ENCODE measurements at regions of chr18 and their contacts with region 1.

Region 1: GRCh38 chr18:22348521-22349316 is 69.0 kb downstream of the CTAGE1 start:
- DNase-seq: peak; percentile 91

Region 2: DNA sequence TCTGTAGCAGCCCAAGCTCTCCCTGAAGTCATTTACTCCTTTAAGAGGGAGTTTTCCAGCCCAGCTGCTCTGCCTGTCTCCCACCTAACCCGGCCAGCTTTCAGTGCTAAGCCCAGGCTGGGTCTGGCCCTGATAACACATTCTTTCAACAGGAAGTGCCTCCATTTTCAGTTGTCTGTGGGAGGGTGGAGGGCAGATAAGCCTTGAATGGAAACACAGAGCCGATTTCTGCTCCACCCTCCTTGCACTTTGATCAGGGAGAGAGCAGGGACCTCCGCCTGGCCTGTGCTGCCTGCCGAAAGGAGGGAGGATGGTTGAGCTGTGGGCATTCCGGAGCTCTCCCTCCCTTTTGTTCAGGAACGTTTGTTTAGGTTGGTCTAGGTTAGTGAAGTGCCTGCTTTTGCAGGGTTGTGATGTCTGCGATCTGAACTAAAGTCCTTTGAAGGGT is 154.5 kb before region 1 on chr18:
- intact Hi-C with region 1: loop called in 1 of 2 experiments (anchors 5 kb)
- DNase-seq: no peak

Region 3: DNA sequence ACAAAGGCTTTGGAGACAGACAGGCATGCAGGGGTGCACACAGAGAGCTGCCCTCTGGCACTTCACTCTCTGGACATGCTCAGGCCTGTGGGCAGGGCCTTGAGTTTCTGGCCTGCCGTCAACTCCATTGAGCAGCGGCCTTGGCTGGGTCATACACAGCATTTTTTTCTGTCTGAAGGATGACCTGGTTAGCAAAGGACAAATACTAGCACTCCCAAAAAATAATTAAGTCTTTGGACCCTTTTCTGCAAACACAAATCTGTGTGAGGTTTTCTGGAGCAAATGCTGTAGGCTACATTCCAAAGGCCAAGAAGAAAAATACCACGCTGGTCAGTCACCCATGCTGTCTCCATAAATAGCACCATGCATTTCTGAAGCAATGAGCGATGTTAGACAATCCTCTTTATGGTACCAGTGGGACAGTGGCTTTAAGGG is 193.7 kb after region 1 on chr18:
- intact Hi-C with region 1: loop called in 1 of 2 experiments (anchors 10 kb)
- DNase-seq: peak; percentile 88

Region 4: DNA sequence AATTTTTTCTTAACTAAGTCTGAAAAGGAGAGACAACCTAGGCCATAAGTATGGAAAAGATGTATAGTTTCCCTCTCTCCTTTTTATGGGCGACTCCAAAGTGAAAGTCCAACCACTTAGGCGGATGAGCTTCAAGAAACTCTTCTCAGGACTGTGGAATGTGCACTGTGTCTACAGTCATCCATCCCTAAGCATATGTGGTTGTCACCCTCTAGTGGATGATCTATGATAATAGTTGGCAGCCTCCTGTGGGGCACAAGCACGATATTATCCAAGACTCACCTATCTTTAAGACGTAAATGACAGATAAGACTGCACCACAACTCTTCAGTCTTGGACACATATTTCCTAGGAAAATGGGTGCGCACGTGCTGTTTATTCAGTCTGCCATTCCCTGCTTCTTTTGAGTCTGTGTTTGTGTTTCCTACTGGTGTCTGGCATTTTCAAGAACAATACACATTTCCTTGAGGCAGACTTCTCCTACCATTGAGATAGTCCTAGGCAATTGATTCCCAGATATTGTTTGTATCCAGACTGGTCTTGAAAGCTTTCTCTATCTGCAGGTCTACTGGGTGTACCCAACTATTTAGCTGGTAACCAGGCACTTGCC is 214.5 kb after region 1 on chr18:
- intact Hi-C with region 1: loop called in 1 of 2 experiments (anchors 10 kb)
- DNase-seq: no peak

Region 5: DNA sequence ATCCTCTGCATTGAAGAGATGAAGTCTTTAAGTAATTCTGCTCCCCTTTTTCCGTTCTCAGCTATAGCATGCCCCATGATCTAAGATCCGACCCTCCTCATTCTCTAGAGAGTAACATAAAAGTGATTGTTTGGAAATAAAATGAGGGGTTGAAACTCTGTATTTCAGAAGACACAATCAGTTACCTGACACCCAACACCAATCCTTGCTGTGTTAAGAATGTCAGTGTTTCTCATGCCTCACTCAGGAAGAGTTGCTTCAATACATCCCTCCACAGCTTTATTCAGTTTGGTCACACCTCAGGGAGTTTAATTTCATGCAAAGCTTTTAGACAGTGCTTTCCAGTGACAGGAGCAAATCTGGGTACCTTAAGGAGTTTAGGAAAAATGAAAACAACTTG is 534.5 kb after region 1 on chr18:
- intact Hi-C with region 1: loop called in 1 of 2 experiments (anchors 5 kb)
- DNase-seq: no peak

Region 6: GRCh38 chr18:23943104-23943503 is 1594.4 kb after region 1 on chr18:
- intact Hi-C with region 1: loop called in 1 of 2 experiments (anchors 5 kb)
- DNase-seq: no peak